ENCODE measurements at regions of chr17 and their contacts with region 1.

Region 1: GRCh38 chr17:47850692-47851573 is at the start of gene SP6:
- DNase-seq: peak; percentile 98 to 99
- H3K4me3 ChIP-seq: peak within 1 kb of the TSS; percentile 56
- H3K4me3 Mint-ChIP-seq: peak within 1 kb of the TSS; percentile 90
- H3K27ac Mint-ChIP-seq: peak within 1 kb of the TSS; percentile 77
- H3K4me1 ChIP-seq: peaks cover 12% of the 10 kb centered on the region
- H3K4me1 Mint-ChIP-seq: peaks cover 23% of the 10 kb centered on the region
- H3K27me3 ChIP-seq: no peaks in the 10 kb centered on the region
- H3K27me3 Mint-ChIP-seq: peaks cover 12% of the 10 kb centered on the region
- CTCF ChIP-seq: peak; percentile 31 to 57
- total RNA-seq, gene SP6: 20.6 and 25.0 TPM in 2 replicates

Region 2: GRCh38 chr17:47797797-47798196 is 53.1 kb before region 1 on chr17:
- CTCF ChIA-PET with region 1: no interaction called
- POLR2A ChIA-PET with region 1: no interaction called
- intact Hi-C with region 1: no loop called
- DNase-seq: peak; percentile 32 to 63
- H3K4me3 ChIP-seq: no peak overlapping the region
- H3K4me3 Mint-ChIP-seq: no peak overlapping the region
- H3K27ac Mint-ChIP-seq: no peak overlapping the region
- H3K4me1 ChIP-seq: no peaks in the 10 kb centered on the region
- H3K4me1 Mint-ChIP-seq: no peaks in the 10 kb centered on the region
- H3K27me3 ChIP-seq: no peaks in the 10 kb centered on the region
- H3K27me3 Mint-ChIP-seq: peaks cover 19% of the 10 kb centered on the region
- CTCF ChIP-seq: no peak

Region 3: GRCh38 chr17:47810205-47810821 is 40.6 kb before region 1 on chr17:
- CTCF ChIA-PET with region 1: no interaction called
- POLR2A ChIA-PET with region 1: no interaction called
- intact Hi-C with region 1: no loop called
- DNase-seq: peak; percentile 100
- H3K4me3 ChIP-seq: no peak overlapping the region
- H3K4me3 Mint-ChIP-seq: peak overlapping the region; percentile 56
- H3K27ac Mint-ChIP-seq: peak overlapping the region; percentile 93
- H3K4me1 ChIP-seq: peaks cover 36% of the 10 kb centered on the region
- H3K4me1 Mint-ChIP-seq: peaks cover 36% of the 10 kb centered on the region
- H3K27me3 ChIP-seq: no peaks in the 10 kb centered on the region
- H3K27me3 Mint-ChIP-seq: no peaks in the 10 kb centered on the region
- CTCF ChIP-seq: no peak

Region 4: DNA sequence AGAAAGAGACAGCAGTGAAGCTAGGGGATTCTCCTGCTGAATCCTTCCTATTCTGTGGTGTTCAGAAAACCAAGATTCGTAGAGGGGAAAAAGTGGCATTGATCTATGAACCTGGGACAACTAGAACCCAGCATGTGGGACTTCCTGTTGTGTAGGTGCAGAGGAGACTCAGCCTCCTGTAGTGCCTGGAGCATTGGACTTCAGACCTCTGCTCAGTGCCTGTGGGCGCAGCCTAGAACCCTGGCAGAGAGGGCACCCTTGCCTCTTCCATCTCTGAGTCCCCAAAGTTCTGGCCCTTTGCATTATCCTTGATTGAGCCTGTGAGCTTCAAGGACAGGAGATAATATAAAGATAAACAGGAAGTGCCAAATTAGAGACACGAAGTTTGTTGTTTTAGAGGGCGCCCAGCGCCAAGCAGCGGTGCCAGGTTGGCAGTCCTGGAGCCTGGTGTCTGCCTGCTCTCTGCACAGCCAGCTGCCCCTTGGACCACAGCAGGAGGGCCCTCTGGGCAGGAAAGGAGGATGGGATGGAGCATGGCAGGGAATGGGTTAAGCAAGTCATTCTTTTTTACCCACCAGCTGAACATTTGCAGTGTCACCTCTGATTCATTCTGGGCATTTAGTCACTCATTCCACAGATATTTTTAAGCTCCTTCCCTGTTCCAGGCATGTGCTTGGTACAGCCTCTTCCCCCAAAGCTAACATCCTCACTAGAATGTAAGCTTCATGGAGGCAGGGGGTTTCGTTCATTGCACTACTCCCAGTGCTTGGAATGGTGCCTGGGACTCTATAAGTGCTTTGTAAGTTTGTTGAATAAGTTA is 11.9 kb after region 1 on chr17:
- CTCF ChIA-PET with region 1: interaction called, 13 read pairs
- POLR2A ChIA-PET with region 1: interaction called, 6 read pairs
- intact Hi-C with region 1: loop called (anchors 1 kb)
- DNase-seq: no peak
- H3K4me3 ChIP-seq: no peak overlapping the region
- H3K4me3 Mint-ChIP-seq: no peak overlapping the region
- H3K27ac Mint-ChIP-seq: peak overlapping the region; percentile 2
- H3K4me1 ChIP-seq: peaks cover 26% of the 10 kb centered on the region
- H3K4me1 Mint-ChIP-seq: peaks cover 16% of the 10 kb centered on the region
- H3K27me3 ChIP-seq: no peaks in the 10 kb centered on the region
- H3K27me3 Mint-ChIP-seq: no peaks in the 10 kb centered on the region
- CTCF ChIP-seq: no peak

Region 5: DNA sequence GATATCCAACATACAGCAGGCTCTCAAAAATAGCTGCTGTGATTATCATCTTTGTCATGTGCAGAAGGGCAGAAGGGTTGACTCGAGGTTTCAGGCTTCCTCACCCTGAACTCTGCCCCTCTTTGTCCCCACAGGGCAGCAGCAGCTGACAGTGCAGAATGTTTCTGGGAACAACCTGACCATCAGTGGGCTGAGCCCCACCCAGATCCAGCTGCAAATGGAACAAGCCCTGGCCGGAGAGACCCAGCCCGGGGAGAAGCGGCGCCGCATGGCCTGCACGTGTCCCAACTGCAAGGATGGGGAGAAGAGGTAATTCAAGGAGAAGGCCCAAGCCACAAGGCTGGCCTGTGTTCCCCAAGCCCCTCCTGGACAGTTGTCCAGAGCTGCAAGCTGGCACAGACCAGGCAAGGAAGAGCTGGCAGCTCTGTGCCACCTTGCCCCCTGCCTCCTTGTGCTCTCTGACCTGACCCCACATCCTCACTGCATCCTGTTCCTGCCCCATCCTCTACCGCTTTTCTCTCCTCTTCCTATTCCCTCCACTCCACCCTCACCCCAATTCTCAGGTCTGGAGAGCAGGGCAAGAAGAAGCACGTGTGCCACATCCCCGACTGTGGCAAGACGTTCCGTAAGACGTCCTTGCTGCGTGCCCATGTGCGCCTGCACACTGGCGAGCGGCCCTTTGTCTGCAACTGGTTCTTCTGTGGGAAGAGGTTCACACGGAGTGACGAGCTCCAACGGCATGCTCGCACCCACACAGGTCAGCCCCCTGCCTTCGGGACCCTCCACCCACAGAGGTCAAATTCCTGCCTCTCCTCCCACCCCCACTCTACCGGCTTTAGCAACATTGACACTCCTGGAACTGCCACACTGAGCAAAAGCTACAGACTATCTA is 74.1 kb after region 1 on chr17:
- CTCF ChIA-PET with region 1: no interaction called
- POLR2A ChIA-PET with region 1: no interaction called
- intact Hi-C with region 1: no loop called
- DNase-seq: no peak
- H3K4me3 ChIP-seq: no peak overlapping the region
- H3K4me3 Mint-ChIP-seq: no peak overlapping the region
- H3K27ac Mint-ChIP-seq: no peak overlapping the region
- H3K4me1 ChIP-seq: no peaks in the 10 kb centered on the region
- H3K4me1 Mint-ChIP-seq: no peaks in the 10 kb centered on the region
- H3K27me3 ChIP-seq: no peaks in the 10 kb centered on the region
- H3K27me3 Mint-ChIP-seq: no peaks in the 10 kb centered on the region
- CTCF ChIP-seq: no peak